Activated CD4-positive, alpha-beta memory T cell treated with anti-CD3 and anti-CD28 coated beads, Interleukin-2, amount 10 ng/mL, durations not matched to agents 7 days and 5 days (primary cell): ENCODE measurements at regions of chr3 and their contacts with region 1.

Region 1: GRCh38 chr3:13452490-13453335 is 27.4 kb upstream of the HDAC11 start:
- DNase-seq: peak; percentile 44
- H3K4me3 Mint-ChIP-seq: peak overlapping the region; percentile 82
- H3K27ac Mint-ChIP-seq: peak overlapping the region; percentile 82
- H3K4me1 Mint-ChIP-seq: peaks cover 22% of the 10 kb centered on the region
- H3K27me3 Mint-ChIP-seq: no peaks in the 10 kb centered on the region

Region 2: GRCh38 chr3:13091898-13092611 is 360.7 kb before region 1 on chr3:
- CTCF ChIA-PET with region 1: interaction called, 46 read pairs
- POLR2A ChIA-PET with region 1: no interaction called
- DNase-seq: peak; percentile 83
- H3K4me3 Mint-ChIP-seq: no peak overlapping the region
- H3K27ac Mint-ChIP-seq: no peak overlapping the region
- H3K4me1 Mint-ChIP-seq: peaks cover 8% of the 10 kb centered on the region
- H3K27me3 Mint-ChIP-seq: peaks cover 11% of the 10 kb centered on the region

Region 3: DNA sequence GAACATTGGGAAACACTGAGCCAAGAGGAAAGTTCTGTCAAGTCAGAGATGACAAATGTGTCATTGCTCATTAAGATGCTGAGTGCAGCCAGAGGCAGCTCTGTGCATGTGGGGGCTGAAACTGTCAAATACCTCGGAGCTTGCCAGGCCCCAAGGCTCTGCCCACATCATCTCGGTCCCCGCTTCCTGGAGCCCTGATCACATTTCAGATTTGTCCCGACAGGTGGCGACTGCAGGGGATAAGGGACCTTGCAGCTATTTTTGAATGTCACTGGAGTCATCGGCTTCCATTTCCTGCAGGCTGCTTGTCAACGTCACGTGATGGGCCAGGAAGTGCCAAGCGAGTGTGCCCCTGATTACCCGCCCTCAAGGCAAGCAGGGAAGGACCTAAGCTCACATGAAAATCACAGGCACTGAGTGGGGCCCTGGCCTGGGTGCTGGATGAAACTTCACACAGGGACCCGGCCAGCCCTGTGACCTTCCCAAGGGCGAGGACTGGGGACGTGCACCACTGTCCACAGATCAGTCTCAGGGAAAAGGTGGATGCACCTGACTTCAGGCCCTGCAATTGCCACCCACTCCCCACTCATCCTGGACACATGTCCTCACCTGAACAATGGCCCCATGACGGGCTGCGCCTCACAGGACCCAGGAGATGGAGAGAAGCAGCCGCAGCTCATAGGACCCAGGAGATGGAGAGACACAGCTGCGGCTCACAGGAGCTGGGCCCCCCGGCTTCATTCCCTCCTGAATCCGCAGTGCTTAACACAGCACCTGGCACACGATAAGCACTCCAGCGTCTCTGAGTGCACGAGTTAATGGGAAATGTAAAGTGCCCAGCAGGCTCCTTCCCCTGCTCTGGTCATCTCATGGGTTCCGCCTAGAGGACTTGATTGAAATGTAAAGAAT is 106.0 kb before region 1 on chr3:
- CTCF ChIA-PET with region 1: interaction called, 105 read pairs
- POLR2A ChIA-PET with region 1: interaction called, 13 read pairs
- DNase-seq: peak; percentile 82
- H3K4me3 Mint-ChIP-seq: no peak overlapping the region
- H3K27ac Mint-ChIP-seq: peak overlapping the region; percentile 69
- H3K4me1 Mint-ChIP-seq: peaks cover 49% of the 10 kb centered on the region
- H3K27me3 Mint-ChIP-seq: no peaks in the 10 kb centered on the region

Region 4: GRCh38 chr3:13391308-13391707 is 61.4 kb before region 1 on chr3:
- CTCF ChIA-PET with region 1: interaction called, 49 read pairs
- POLR2A ChIA-PET with region 1: interaction called, 3 read pairs
- DNase-seq: peak; percentile 18
- H3K4me3 Mint-ChIP-seq: no peak overlapping the region
- H3K27ac Mint-ChIP-seq: no peak overlapping the region
- H3K4me1 Mint-ChIP-seq: peaks cover 6% of the 10 kb centered on the region
- H3K27me3 Mint-ChIP-seq: no peaks in the 10 kb centered on the region

Region 5: GRCh38 chr3:13419505-13420044 is 33.1 kb before region 1 on chr3:
- CTCF ChIA-PET with region 1: interaction called, 119 read pairs
- POLR2A ChIA-PET with region 1: interaction called, 134 read pairs
- DNase-seq: peak; percentile 60
- H3K4me3 Mint-ChIP-seq: peak overlapping the region; percentile 85
- H3K27ac Mint-ChIP-seq: peak overlapping the region; percentile 97
- H3K4me1 Mint-ChIP-seq: peaks cover 59% of the 10 kb centered on the region
- H3K27me3 Mint-ChIP-seq: no peaks in the 10 kb centered on the region

Region 6: DNA sequence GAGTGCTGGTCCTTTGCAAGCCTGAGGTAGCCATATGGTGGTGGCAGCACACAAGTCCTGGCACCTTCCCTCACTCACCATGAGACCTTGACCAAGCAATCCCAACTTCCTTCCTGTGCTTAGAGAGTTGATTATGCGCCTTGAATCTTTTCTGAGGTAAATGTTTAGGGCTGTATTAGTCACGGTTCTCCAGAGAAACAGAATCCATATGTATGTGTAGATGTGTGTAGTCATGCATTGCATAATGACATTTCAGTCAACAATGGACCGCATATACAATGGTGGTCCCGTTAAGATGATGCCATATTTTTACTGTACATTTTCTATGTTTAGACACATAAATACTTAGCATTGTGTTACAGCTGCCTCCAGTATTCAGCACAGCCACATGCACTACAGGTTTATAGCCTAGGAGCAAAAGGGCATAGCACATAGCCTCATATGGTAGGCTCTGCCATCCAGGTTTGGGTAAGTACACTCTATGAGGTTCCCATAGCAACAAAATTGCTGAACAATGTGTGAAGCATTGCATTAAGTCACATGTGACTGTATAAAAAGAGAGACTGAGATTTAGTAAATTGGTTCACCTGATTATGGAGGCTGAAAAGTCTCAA is 12.4 kb before region 1 on chr3:
- CTCF ChIA-PET with region 1: interaction called, 26 read pairs
- POLR2A ChIA-PET with region 1: interaction called, 3 read pairs
- DNase-seq: no peak
- H3K4me3 Mint-ChIP-seq: no peak overlapping the region
- H3K27ac Mint-ChIP-seq: no peak overlapping the region
- H3K4me1 Mint-ChIP-seq: no peaks in the 10 kb centered on the region
- H3K27me3 Mint-ChIP-seq: peaks cover 11% of the 10 kb centered on the region

Region 7: DNA sequence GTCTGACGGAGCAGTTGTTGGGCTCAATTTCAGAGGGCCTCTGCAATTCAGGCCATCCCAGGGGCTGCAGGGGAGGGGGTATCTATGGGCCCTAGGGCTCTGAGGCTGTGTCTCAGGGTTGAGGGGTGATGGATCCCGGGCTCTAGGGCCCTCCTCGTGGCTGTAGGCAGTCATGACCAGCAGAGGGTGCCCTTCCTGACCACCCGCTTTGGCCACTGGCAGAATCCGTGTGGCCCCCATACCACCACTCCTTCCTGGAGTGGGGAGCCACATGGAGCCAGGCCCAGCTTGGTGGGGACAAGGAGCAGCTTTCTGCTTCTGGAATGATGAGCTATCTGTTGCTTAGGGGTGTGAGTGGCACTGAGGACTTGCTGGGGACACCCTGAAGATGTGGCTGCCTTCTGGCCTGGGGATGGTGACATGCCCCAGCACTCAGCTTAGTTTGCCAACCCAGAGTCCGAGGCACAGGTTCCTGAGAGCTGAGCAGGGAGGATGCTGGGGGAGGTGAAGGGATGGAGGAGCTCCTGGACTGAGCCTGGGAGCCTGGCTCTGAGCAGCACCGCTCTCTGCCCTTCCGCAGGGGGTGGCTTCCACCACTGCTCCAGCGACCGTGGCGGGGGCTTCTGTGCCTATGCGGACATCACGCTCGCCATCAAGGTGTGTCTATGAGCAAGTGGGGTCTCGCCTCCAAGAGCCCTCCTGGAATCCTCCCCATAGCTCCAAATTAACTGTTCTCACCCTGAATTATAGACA is 47.6 kb after region 1 on chr3:
- CTCF ChIA-PET with region 1: no interaction called
- POLR2A ChIA-PET with region 1: no interaction called
- DNase-seq: no peak
- H3K4me3 Mint-ChIP-seq: no peak overlapping the region
- H3K27ac Mint-ChIP-seq: no peak overlapping the region
- H3K4me1 Mint-ChIP-seq: peaks cover 12% of the 10 kb centered on the region
- H3K27me3 Mint-ChIP-seq: no peaks in the 10 kb centered on the region